ENCODE measurements at regions of chr13 and their contacts with region 1.

Region 1: DNA sequence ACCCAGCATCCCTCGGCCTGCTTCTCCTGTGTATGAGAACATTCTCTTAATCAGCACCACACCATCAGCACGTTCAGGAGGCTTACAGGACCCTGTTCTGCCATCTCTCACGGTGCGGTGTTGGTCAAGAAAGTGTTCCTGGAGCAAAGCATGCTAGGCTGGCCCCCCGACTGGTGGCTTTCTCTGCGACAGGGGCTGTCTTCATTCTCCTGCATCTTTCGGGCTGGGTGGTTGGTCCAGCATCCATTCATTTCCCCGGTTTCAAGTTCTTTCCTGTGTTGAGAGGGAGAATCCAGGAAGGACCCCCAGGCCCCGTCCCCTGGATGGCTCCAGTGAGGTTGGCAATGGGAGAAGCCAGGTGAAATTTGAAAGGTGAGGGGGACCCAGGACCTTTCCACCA is 55.8 kb downstream of the C1QTNF9 start:
- DNase-seq: no peak
- H3K4me3 ChIP-seq: no peak overlapping the region
- H3K27ac ChIP-seq: no peak overlapping the region
- H3K4me1 ChIP-seq: peaks cover 0 to 11% (median 3%) of the 10 kb centered on the region in 4 donors
- H3K27me3 ChIP-seq: no peaks in the 10 kb centered on the region
- CTCF ChIP-seq: no peak
- EP300 ChIP-seq: no peak
- POLR2A ChIP-seq: no peak

Region 2: DNA sequence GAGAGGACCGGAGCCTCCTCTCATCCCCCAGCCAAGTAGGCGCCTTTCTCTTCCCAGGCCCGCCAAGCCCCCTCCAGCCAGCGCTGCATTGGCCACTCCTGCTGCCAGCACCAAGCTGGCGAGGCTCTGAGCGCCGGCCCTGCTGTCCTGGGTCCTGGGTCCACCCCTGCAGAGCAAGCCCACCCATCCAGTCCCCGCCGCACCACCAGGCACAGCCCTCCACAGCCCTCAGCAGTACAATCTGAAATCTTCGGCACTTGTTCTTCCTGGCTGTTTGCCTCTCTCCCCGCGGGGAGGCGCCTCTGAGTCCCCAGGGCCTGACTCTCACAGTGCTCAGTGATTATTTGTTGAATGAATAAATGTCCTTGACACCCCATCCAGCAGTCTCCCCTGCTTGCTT is 1420.8 kb before region 1 on chr13:
- in situ Hi-C with region 1: loop called in 3 of 4 experiments (anchors 5 to 25 kb)
- intact Hi-C with region 1: no loop called
- DNase-seq: no peak
- H3K4me3 ChIP-seq: no peak overlapping the region
- H3K27ac ChIP-seq: no peak overlapping the region
- H3K4me1 ChIP-seq: no peaks in the 10 kb centered on the region
- H3K27me3 ChIP-seq: no peaks in the 10 kb centered on the region
- CTCF ChIP-seq: no peak
- EP300 ChIP-seq: no peak
- POLR2A ChIP-seq: no peak

Region 3: DNA sequence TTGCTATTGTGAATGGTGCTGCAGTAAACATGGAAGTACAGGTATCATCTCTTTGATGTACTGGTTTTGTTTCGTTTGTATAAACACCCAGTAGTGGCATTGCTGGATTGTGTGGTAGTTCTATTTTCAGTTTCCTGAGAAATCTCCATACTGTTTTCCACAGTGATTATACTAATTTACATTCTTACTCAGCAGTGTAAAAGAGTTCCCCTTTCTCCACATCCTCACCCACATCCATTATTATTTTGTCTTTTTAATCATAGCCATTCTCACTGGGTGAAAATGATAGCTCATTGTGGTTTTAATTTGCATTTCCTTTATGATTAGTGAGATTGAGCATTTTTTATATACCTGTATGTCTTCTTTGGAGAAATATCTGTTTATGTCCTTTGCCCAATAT is 209.7 kb after region 1 on chr13:
- in situ Hi-C with region 1: no loop called
- intact Hi-C with region 1: no loop called
- DNase-seq: no peak
- H3K4me3 ChIP-seq: no peak overlapping the region
- H3K27ac ChIP-seq: no peak overlapping the region
- H3K4me1 ChIP-seq: no peaks in the 10 kb centered on the region
- H3K27me3 ChIP-seq: peaks cover 1% of the 10 kb centered on the region
- CTCF ChIP-seq: no peak
- EP300 ChIP-seq: no peak
- POLR2A ChIP-seq: no peak

Measured in transverse colon (tissue), 4 donors.